ENCODE measurements at regions of chr13 and their contacts with region 1.

Region 1: DNA sequence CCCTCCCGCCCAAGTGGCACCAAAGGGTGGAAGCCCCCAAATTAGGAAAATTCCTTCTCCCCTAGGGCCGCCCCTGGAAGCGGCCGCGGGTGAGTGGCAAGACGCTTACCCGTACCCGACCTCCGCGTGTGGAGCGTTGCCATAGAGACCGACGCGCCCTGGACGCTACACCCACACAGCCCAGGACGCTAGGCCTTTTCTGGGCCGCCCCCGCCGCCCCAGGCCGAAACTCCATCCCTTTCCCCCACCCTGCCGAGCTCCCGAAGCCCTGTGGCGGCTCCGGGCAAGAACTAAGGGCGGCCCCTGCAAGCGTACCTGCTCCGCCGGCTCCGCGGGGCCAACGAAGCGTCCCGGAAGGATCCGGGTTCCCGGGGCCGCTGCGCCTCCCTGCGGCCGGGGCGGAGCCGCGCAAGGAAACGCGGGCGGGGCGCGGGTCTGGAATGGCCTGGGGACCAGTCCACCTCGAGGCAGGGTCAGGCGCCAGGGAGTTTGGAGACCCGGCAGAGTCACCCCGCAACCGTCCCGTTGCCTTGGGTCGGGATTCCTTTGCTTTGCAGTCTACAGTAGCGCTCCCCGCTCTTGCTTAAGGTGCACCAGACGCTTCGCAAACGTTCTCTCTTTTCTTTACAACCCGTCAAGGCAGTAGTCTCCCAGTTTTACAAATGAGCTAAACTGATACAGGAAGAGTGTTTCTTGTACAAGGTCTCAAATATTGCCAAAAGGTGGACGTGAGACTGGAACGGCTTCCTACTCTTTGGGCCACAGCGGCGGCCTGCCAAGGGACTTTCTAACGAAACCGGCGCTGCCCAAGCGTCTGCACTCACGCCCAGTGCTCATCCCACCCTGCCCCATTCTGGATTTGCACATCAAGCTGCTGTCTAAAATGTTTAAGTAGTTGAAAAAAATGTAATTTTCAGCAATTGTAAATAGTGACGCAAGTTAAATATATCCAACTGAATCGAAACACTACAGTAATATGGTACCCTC is at the start of gene NEK5:
- DNase-seq: peak; percentile 27
- ATAC-seq: peak; percentile 88
- H3K4me3 ChIP-seq: peak within 1 kb of the TSS; percentile 60 to 69
- H3K27ac ChIP-seq: no peak within 1 kb of the TSS
- H3K4me1 ChIP-seq: peaks cover 10 to 20% of the 10 kb centered on the region in 2 experiments; a peak in 3 of 4 replicates
- H3K27me3 ChIP-seq: no peaks in the 10 kb centered on the region
- CTCF ChIP-seq: peak; percentile 57 to 83 (median 61); a peak in 5 of 6 replicates
- POLR2A ChIP-seq: no peak
- RAD21 ChIP-seq: peak; percentile 61
- total RNA-seq, gene NEK5: 1.5 TPM

Region 2: DNA sequence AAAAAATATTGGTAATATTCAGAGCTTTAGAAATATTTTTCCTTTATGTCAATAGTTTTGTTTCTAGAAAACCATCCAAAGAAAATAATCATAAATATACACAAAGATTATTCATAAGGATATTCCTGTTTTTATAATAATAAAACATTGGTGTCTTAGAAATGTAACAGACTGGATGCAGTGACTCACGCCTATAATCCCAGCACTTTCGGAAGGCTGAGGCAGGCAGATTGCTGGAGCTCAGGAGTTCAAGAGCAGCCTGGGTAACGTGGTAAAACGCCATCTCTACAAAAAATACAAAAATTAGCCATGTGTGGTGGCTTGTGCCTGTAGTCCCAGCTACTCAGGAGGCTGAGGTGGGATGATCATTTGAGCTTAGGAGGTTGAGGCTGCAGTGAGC is 431.8 kb before region 1 on chr13:
- CTCF ChIA-PET with region 1: no interaction called
- POLR2A ChIA-PET with region 1: no interaction called
- RAD21 ChIA-PET with region 1: no interaction called
- intact Hi-C with region 1: no loop called
- DNase-seq: no peak
- ATAC-seq: no peak
- H3K4me3 ChIP-seq: no peak overlapping the region
- H3K27ac ChIP-seq: no peak overlapping the region
- H3K4me1 ChIP-seq: no peaks in the 10 kb centered on the region
- H3K27me3 ChIP-seq: no peaks in the 10 kb centered on the region
- CTCF ChIP-seq: no peak
- POLR2A ChIP-seq: no peak
- RAD21 ChIP-seq: no peak

Region 3: DNA sequence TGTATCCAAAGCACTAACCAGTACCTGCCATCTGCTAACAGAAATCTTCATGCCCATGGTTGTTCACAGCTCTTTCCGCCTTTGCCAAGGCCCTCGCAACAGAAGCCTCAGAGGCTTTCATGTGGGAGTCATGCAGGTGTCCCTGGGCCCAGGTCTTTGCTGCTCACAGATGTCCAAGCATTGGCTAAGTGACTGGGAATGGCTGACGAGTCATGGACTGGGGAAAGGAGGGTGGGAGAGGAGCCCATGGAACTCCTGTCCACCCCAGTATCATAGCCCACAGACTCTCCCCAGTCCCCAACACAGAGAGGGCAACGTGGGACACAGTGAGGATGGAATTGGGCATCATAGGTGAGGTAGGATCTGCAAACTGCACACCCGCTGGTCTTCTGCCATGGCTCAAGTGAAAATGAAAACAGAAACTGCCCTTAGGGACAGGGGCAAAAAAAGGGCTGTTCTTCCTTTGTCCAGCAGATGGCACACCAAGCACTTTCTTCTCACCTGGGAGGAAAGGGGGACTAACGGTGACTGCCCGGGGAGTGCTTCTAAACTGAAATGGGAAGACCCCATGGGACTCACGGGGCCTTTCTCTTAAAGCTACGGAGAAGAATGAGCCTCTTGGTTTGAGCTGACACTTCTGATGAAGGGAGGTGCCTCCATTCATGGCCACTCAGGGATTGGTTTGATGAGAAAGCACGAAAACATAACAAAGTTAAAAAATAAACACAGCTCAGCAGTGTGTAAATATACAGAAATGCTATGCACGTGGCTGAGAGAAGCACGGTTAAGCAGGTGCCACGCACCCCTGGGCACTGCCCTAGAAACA is 314.0 kb before region 1 on chr13:
- CTCF ChIA-PET with region 1: interaction called, 22 read pairs
- POLR2A ChIA-PET with region 1: no interaction called
- RAD21 ChIA-PET with region 1: no interaction called
- intact Hi-C with region 1: loop called (anchors 1 kb)
- DNase-seq: peak; percentile 60
- ATAC-seq: peak; percentile 81
- H3K4me3 ChIP-seq: peak overlapping the region; percentile 15 to 33
- H3K27ac ChIP-seq: no peak overlapping the region
- H3K4me1 ChIP-seq: peaks cover 0 to 31% of the 10 kb centered on the region in 2 experiments; a peak in 3 of 4 replicates
- H3K27me3 ChIP-seq: no peaks in the 10 kb centered on the region; the same call in 1 of the 2 replicates
- CTCF ChIP-seq: peak; percentile 75 to 87 (median 85)
- POLR2A ChIP-seq: no peak
- RAD21 ChIP-seq: peak; percentile 76

Region 4: DNA sequence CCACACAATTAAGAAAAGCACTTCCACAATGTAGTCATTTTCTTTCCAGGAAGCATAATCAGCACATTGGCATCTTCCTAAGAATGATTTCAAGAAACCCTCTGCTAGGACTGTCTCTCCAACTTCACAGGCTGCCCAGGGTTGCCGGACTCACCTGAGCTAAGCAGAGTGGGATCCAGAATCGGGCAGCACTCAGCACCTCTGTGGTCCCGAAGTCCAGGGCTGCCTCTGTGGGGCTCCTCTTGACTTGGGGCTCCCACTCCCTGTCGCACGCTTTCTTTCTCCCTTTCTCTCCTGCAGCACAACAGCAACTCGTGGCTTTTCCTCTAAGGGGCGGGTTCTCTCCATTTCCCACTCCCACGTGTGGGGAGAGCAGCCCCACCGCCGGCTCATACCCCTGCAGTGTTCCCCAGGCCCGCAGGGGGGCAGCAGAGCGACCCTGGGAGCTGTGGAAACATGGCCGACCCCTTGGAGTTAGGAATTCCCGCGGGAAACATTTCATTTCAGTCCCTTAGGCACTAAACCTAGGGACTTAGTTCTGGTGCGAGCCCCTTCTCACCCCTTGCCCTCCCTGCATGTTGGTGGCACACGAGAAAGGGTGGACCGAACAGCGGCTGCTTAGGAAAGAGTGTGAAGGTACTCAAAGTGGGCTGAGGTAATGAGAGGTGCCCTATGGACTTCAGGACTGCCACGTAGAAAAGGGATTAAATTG is 284.0 kb before region 1 on chr13 and contains the start of gene TMEM272:
- CTCF ChIA-PET with region 1: interaction called, 11 read pairs
- POLR2A ChIA-PET with region 1: no interaction called
- RAD21 ChIA-PET with region 1: no interaction called
- intact Hi-C with region 1: loop called (anchors 1 kb)
- DNase-seq: peak; percentile 23
- ATAC-seq: peak; percentile 85
- H3K4me3 ChIP-seq: peak within 1 kb of the TSS in 1 of 2 experiments; percentile 34; a peak in 2 of 4 replicates
- H3K27ac ChIP-seq: no peak within 1 kb of the TSS
- H3K4me1 ChIP-seq: peaks cover 3 to 14% of the 10 kb centered on the region in 2 experiments; a peak in 3 of 4 replicates
- H3K27me3 ChIP-seq: no peaks in the 10 kb centered on the region
- CTCF ChIP-seq: peak; percentile 54 to 98 (median 92); a peak in 5 of 6 replicates
- POLR2A ChIP-seq: no peak
- RAD21 ChIP-seq: peak; percentile 44; the same call in 1 of the 2 replicates
- total RNA-seq, gene TMEM272: 0.17 TPM

Region 5: DNA sequence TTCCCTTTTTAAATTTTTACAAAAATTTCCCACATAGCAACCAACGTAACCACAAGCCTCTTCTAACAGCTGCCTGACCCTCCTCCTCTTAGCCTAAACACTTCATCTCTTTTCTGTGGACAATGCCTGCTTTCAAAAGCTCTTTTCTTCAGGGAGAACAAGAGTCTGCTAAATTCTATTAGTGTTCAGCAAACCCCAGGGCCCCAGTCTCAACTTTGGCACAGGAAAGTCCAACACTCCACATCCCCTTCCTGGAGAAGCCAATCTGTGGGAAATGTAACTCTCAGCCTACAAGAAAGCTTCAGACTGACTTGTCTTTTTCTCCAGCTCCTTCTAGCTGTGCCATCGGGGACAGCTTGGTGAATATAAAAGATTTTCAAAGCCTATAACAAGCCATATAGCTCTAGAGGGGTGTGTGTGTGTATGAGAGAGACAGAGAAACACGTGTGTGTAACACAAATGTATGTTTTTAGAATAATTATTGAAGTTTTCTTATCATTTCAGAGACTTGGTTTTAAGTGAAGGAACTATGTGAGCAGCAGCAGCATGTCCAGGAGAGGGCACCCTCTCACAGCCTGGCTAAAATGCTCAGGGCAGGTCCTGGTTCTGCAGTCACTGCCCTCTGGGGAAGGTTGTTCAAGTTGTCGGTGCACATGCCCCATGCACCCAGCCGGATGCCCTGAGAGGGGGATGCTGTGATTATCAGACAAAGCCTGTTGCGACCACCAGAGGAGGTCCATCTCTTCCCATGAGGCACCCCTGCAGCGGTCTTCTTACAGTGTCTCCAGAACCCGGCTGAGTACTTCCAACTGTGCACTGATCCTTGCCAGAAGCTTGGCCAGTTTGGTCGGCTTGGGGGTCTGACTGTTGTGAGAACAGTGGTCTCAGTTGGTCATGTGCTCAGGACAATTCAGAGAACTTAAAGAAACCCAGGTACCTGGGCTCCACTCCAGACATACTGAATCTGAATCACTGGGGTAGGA is 232.8 kb before region 1 on chr13:
- CTCF ChIA-PET with region 1: interaction called, 24 read pairs
- POLR2A ChIA-PET with region 1: no interaction called
- RAD21 ChIA-PET with region 1: interaction called in 1 of 2 experiments, 7 read pairs
- intact Hi-C with region 1: loop called (anchors 1 kb)
- DNase-seq: peak; percentile 29
- ATAC-seq: peak; percentile 99
- H3K4me3 ChIP-seq: no peak overlapping the region
- H3K27ac ChIP-seq: no peak overlapping the region
- H3K4me1 ChIP-seq: no peaks in the 10 kb centered on the region
- H3K27me3 ChIP-seq: peaks cover 6% of the 10 kb centered on the region; the same call in 1 of the 2 replicates
- CTCF ChIP-seq: peak; percentile 77 to 81 (median 81); a peak in 5 of 6 replicates
- POLR2A ChIP-seq: no peak
- RAD21 ChIP-seq: peak; percentile 78

Region 6: GRCh38 chr13:51935326-51936201 is 193.4 kb before region 1 on chr13:
- CTCF ChIA-PET with region 1: interaction called, 32 read pairs
- POLR2A ChIA-PET with region 1: no interaction called
- RAD21 ChIA-PET with region 1: interaction called, 4 to 6 read pairs
- intact Hi-C with region 1: loop called (anchors 1 kb)
- DNase-seq: peak; percentile 19
- ATAC-seq: peak; percentile 98
- H3K4me3 ChIP-seq: no peak overlapping the region
- H3K27ac ChIP-seq: no peak overlapping the region
- H3K4me1 ChIP-seq: peaks cover 2 to 7% of the 10 kb centered on the region in 2 experiments; a peak in 3 of 4 replicates
- H3K27me3 ChIP-seq: no peaks in the 10 kb centered on the region
- CTCF ChIP-seq: peak; percentile 35 to 78 (median 62); a peak in 5 of 6 replicates
- POLR2A ChIP-seq: no peak
- RAD21 ChIP-seq: peak; percentile 56

Region 7: DNA sequence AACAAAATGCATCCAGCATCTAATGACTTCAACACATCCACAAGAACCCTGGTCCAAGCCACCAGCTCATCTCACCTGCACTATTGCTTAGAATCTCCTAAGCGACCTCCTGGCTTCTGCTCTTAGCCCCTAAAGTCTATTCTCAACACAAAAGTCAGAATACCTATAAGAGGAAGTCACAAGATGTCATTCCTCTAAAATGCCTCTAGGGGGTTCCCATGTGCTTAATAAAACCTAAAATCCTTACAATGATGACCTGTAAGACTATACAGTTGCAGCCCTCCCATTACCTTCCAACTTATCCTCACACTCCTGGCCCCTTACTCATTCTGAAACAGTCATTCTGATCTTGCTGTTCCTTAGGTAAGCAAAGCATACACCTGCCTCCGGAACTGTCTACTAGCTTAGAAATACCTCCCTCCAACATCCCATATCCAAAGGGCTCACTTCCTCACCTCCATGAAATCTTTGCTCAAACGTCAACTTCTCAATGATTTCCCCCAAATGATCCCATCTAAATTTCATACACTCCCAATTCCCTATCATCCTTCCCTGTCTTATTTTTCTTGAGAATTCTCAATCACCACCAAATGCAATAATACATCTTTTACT is 127.8 kb before region 1 on chr13:
- CTCF ChIA-PET with region 1: interaction called, 8 read pairs
- POLR2A ChIA-PET with region 1: no interaction called
- RAD21 ChIA-PET with region 1: interaction called in 1 of 2 experiments, 3 read pairs
- intact Hi-C with region 1: loop called (anchors 5 kb)
- DNase-seq: peak; percentile 32
- ATAC-seq: peak; percentile 86
- H3K4me3 ChIP-seq: no peak overlapping the region
- H3K27ac ChIP-seq: no peak overlapping the region
- H3K4me1 ChIP-seq: peaks cover 0 to 5% of the 10 kb centered on the region in 2 experiments; a peak in 1 of 4 replicates
- H3K27me3 ChIP-seq: no peaks in the 10 kb centered on the region
- CTCF ChIP-seq: peak; percentile 52 to 74 (median 55); a peak in 5 of 6 replicates
- POLR2A ChIP-seq: no peak
- RAD21 ChIP-seq: peak; percentile 64

Region 8: GRCh38 chr13:52405767-52406494 is 276.9 kb after region 1 on chr13 and contains the start of gene THSD1:
- CTCF ChIA-PET with region 1: no interaction called
- POLR2A ChIA-PET with region 1: no interaction called
- RAD21 ChIA-PET with region 1: no interaction called
- intact Hi-C with region 1: no loop called
- DNase-seq: no peak
- ATAC-seq: no peak
- H3K4me3 ChIP-seq: no peak within 1 kb of the TSS
- H3K27ac ChIP-seq: no peak within 1 kb of the TSS
- H3K4me1 ChIP-seq: no peaks in the 10 kb centered on the region
- H3K27me3 ChIP-seq: no peaks in the 10 kb centered on the region
- CTCF ChIP-seq: no peak
- POLR2A ChIP-seq: no peak
- RAD21 ChIP-seq: no peak
- total RNA-seq, gene THSD1: 0.76 TPM